Left ventricle myocardium inferior (tissue), 1 donor: ENCODE measurements at regions of chr12 and their contacts with region 1.

Region 1: GRCh38 chr12:57111031-57111734 is at the start of gene STAT6:
- DNase-seq: peak; percentile 76
- H3K4me3 ChIP-seq: peak within 1 kb of the TSS; percentile 79
- H3K27ac ChIP-seq: peak within 1 kb of the TSS; percentile 98
- H3K4me1 ChIP-seq: peaks cover 57% of the 10 kb centered on the region
- H3K27me3 ChIP-seq: no peaks in the 10 kb centered on the region
- CTCF ChIP-seq: no peak
- total RNA-seq, gene STAT6: 46.2 TPM

Region 2: GRCh38 chr12:56880125-56881075 is 230.8 kb before region 1 on chr12:
- intact Hi-C with region 1: no loop called
- DNase-seq: no peak
- H3K4me3 ChIP-seq: no peak overlapping the region
- H3K27ac ChIP-seq: no peak overlapping the region
- H3K4me1 ChIP-seq: peaks cover 13% of the 10 kb centered on the region
- H3K27me3 ChIP-seq: no peaks in the 10 kb centered on the region
- CTCF ChIP-seq: no peak

Region 3: DNA sequence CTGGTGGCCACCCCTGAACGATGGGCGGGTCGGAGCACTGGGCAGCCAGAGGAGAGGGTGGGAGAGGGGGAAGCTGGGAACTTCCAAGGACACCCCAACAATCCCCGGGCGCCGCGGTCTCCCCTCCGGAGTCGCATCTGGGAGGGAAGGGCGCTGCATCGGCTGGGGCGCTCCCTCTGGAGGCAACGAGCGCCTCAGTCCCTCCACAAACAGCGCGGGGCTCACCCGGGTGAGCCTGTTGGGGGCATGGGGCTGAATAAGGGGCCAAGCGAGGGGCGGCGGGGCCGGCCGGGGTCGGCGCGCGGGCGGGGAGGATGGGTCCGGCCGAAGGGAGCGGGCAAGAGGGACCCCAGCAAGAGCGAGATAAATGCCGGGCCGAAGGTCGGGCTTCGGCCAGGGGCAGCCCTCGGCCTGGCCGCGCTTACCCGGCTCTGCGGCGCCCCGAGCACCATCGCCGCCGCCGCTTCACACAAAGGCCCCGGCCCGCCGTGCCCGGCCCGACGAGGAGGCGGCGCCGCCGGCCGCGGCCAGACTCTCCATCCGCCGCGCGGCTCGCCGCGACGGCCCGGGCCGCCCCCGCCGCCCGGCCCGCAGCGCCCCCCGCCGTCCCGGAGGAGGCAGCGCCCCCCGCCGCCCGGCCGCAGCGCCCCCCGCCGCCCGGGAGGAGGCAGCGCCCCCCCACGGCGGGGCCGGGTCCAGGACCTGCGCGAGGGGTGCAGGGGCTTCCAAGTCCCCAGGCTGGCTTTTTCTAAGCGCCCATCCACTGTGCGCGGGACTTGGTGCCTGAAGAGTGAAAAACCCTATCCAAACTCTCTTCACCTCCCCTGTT is 105.0 kb before region 1 on chr12 and contains the start of gene ZBTB39:
- intact Hi-C with region 1: loop called (anchors 5 kb)
- DNase-seq: peak; percentile 64
- H3K4me3 ChIP-seq: peak within 1 kb of the TSS; percentile 96
- H3K27ac ChIP-seq: peak within 1 kb of the TSS; percentile 89
- H3K4me1 ChIP-seq: peaks cover 45% of the 10 kb centered on the region
- H3K27me3 ChIP-seq: no peaks in the 10 kb centered on the region
- CTCF ChIP-seq: peak; percentile 68
- total RNA-seq, gene ZBTB39: 2.7 TPM

Region 4: GRCh38 chr12:57069523-57069922 is 41.7 kb before region 1 on chr12:
- intact Hi-C with region 1: loop called (anchors 2 kb)
- DNase-seq: no peak
- H3K4me3 ChIP-seq: no peak overlapping the region
- H3K27ac ChIP-seq: peak overlapping the region; percentile 62
- H3K4me1 ChIP-seq: peaks cover 7% of the 10 kb centered on the region
- H3K27me3 ChIP-seq: no peaks in the 10 kb centered on the region
- CTCF ChIP-seq: peak; percentile 93

Region 5: GRCh38 chr12:57491393-57492280 is 380.5 kb after region 1 on chr12:
- intact Hi-C with region 1: no loop called
- DNase-seq: no peak
- H3K4me3 ChIP-seq: no peak overlapping the region
- H3K27ac ChIP-seq: no peak overlapping the region
- H3K4me1 ChIP-seq: peaks cover 25% of the 10 kb centered on the region
- H3K27me3 ChIP-seq: no peaks in the 10 kb centered on the region
- CTCF ChIP-seq: no peak